ENCODE measurements at regions of chr1 and their contacts with region 1.

Region 1: GRCh38 chr1:109112652-109113285 is 1.1 kb upstream of the ELAPOR1 start:
- DNase-seq: peak; percentile 86 to 94
- H3K4me3 ChIP-seq: peak overlapping the region; percentile 18 to 77 (median 57)
- H3K27ac ChIP-seq: peak overlapping the region; percentile 29 to 35
- H3K4me1 ChIP-seq: peaks cover 6% of the 10 kb centered on the region in 2 donors
- H3K27me3 ChIP-seq: no peaks in the 10 kb centered on the region
- CTCF ChIP-seq: peak; percentile 90 to 96 (median 90)
- POLR2A ChIP-seq: no peak

Region 2: GRCh38 chr1:108963052-108963686 is 149.6 kb before region 1 on chr1 and contains the start of gene CLCC1:
- intact Hi-C with region 1: loop called (anchors 10 kb)
- DNase-seq: peak; percentile 91 to 92
- H3K4me3 ChIP-seq: peak within 1 kb of the TSS; percentile 71 to 94 (median 86)
- H3K27ac ChIP-seq: peak within 1 kb of the TSS; percentile 99
- H3K4me1 ChIP-seq: no peaks in the 10 kb centered on the region
- H3K27me3 ChIP-seq: no peaks in the 10 kb centered on the region
- CTCF ChIP-seq: no peak
- POLR2A ChIP-seq: peak; percentile 68
- total RNA-seq, gene CLCC1: 29.5 to 31.8 (median 29.7) TPM

Region 3: DNA sequence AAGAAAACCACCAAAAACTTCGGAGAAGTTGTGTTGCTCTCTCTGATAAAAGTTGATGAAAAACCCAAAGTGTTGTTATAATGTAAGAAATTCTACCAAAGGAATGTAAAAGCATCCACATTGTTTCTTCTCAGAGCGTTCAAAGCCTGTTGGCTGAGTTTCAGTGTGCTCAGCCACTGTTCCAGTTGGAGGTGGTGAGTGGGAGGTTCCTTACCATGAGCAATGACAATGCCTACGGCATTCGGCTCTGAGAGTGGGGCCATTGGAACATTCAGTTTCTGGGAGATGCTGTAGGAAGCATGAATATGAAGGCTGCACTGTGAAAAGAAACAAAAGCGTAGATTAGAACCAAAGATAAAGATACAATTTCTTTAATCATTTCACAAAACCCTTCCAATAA is 214.5 kb after region 1 on chr1:
- intact Hi-C with region 1: no loop called
- DNase-seq: no peak
- H3K4me3 ChIP-seq: no peak overlapping the region
- H3K27ac ChIP-seq: no peak overlapping the region
- H3K4me1 ChIP-seq: no peaks in the 10 kb centered on the region
- H3K27me3 ChIP-seq: no peaks in the 10 kb centered on the region
- CTCF ChIP-seq: no peak
- POLR2A ChIP-seq: no peak

Measured in breast epithelium (tissue), 4 donors.